Gastrocnemius medialis (tissue), 4 donors: ENCODE measurements at regions of chr21 and their contacts with region 1.

Region 1: GRCh38 chr21:34795175-34795547 is 126.4 kb downstream of the CLIC6 start:
- DNase-seq: peak in 1 of 2 donors; percentile 49
- ATAC-seq: peak; percentile 77 to 80
- H3K4me3 ChIP-seq: peak overlapping the region in 1 of 4 donors; percentile 9
- H3K27ac ChIP-seq: peak overlapping the region; percentile 78 to 88 (median 84)
- H3K4me1 ChIP-seq: peaks cover 31 to 42% of the 10 kb centered on the region in 2 donors
- H3K27me3 ChIP-seq: no peaks in the 10 kb centered on the region
- CTCF ChIP-seq: peak in 4 of 5 experiments; percentile 18 to 30 (median 24)
- POLR2A ChIP-seq: no peak

Region 2: DNA sequence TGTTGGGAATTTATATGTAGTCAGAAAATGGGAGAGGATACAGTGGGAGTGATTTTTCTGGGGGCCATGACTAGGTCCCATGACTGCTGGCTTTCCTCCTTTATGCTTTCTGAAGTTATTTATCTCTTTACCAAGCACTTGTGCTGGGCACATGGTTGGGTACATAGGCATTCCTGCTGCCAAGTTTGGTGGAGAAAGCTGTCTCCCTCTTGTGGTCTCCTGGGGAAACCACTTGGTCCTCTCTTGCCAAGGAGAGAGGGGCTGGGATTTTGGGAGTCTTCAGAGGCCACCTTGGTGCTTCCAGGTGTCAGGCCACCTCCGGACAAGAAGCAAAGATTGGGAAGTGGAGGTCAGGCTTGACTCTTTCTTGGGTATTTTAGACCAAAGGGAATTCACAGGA is 551.6 kb before region 1 on chr21:
- in situ Hi-C with region 1: no loop called
- intact Hi-C with region 1: no loop called
- DNase-seq: no peak
- ATAC-seq: peak in 1 of 2 donors; percentile 51
- H3K4me3 ChIP-seq: no peak overlapping the region
- H3K27ac ChIP-seq: no peak overlapping the region
- H3K4me1 ChIP-seq: no peaks in the 10 kb centered on the region
- H3K27me3 ChIP-seq: no peaks in the 10 kb centered on the region
- CTCF ChIP-seq: peak in 1 of 5 experiments; percentile 16
- POLR2A ChIP-seq: no peak

Region 3: DNA sequence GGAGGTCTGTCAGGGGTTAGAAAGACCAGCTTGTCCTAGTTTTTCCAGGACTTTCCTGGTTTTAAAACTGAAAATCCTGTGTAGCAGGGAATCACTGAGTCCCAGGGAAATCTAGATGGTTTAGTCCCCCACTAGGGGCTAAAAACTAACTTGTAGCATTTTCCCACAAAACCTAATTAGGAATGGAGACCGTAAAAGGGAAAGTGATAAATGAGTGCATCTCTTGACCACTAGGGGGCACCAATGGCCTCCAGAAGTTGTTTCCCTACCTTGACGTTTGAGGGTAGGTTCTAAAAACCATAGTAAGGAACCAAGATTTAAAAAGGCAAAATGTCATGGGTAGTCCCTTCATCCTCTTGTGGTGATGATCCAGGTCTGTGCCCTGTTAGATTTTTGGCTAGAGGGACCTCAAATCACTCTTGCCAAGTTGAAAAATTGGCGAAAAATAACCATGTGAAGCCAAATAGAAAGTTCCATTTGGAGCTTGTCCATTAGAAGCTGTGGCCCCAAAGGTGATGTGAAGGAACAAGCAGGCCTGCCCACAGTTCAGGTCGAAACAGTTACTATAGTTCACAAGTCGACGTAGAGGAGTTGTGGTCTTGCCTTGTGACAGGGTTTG is 101.9 kb before region 1 on chr21:
- in situ Hi-C with region 1: loop called in 1 of 4 experiments (anchors 25 kb)
- intact Hi-C with region 1: loop called (anchors 5 kb)
- DNase-seq: peak in 1 of 2 donors; percentile 38
- ATAC-seq: peak; percentile 29 to 43
- H3K4me3 ChIP-seq: no peak overlapping the region
- H3K27ac ChIP-seq: no peak overlapping the region
- H3K4me1 ChIP-seq: peaks cover 14 to 24% of the 10 kb centered on the region in 2 donors
- H3K27me3 ChIP-seq: no peaks in the 10 kb centered on the region
- CTCF ChIP-seq: peak; percentile 56 to 84 (median 75)
- POLR2A ChIP-seq: no peak

Region 4: DNA sequence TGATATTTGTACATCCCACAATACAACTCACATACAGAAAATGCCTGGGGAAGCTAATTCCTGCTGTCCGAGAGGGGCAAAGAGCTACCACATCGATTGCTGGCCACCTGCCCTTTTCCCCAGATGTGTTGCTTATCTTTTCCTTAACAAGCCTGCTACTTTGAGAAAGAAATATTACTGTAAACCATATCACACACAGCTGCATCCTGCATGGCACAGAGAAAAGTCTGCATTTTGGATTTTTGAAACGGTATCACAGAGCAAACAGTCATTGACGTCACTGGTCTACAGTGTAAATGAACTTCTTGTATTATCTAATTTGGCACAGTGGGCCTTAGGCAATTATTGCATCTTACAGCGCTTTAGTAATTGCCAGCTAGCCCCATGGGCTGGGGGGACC is 38.3 kb after region 1 on chr21:
- in situ Hi-C with region 1: no loop called
- intact Hi-C with region 1: no loop called
- DNase-seq: no peak
- ATAC-seq: no peak
- H3K4me3 ChIP-seq: no peak overlapping the region
- H3K27ac ChIP-seq: no peak overlapping the region
- H3K4me1 ChIP-seq: peaks cover 14 to 31% of the 10 kb centered on the region in 2 donors
- H3K27me3 ChIP-seq: no peaks in the 10 kb centered on the region
- CTCF ChIP-seq: no peak
- POLR2A ChIP-seq: no peak

Region 5: DNA sequence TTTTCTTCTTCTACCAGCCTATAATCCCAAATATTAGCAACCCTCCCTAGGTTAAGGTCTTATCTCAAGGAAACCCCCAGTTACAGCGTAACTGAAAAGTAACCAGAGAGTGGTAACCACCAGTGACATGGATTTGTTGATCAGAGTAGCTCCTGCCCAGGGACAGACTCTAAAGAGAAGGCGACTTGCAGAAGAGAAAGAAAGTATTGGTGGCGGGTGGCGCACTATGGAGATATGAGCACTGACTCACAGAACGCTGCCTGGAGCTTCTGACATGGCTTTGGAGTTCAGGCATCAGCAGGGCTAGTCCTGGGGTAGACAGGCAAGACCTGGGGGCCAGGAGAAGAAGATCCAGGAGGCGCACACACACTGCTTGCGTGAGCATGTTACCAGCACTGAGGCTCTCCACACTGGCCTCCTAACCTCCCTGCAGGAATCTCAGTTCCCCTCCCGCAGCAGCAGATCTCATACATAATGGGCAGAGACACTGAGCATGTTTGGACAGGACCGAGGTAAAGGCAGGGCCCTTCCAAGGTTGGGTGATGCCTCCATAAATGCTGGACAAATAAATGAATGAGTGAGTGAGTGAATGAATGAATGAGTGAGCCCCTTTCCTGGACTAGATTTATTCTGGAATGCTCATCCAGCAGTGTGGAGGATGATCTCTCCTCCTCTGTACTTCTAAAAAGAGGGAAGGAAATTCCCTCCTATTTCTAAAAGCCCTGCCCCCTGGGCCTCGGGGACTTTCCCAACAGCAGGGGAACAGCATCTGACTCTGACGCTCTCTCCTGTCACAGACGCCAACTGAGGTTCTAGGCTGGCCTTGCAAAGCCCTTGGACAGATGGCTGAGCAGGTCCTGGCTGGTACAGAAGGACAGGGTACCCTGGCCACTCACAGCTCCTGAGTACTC is 49.1 kb after region 1 on chr21:
- in situ Hi-C with region 1: no loop called
- intact Hi-C with region 1: loop called (anchors 1 kb)
- DNase-seq: peak; percentile 86 to 93
- ATAC-seq: peak; percentile 65
- H3K4me3 ChIP-seq: peak overlapping the region in 2 of 4 donors; percentile 43 to 49
- H3K27ac ChIP-seq: peak overlapping the region; percentile 85 to 97 (median 92)
- H3K4me1 ChIP-seq: peaks cover 57 to 59% of the 10 kb centered on the region in 2 donors
- H3K27me3 ChIP-seq: no peaks in the 10 kb centered on the region
- CTCF ChIP-seq: no peak
- POLR2A ChIP-seq: peak; percentile 46 to 76

Region 6: GRCh38 chr21:34874684-34875513 is 79.7 kb after region 1 on chr21:
- in situ Hi-C with region 1: loop called (anchors 10 kb)
- intact Hi-C with region 1: no loop called
- DNase-seq: no peak
- ATAC-seq: no peak
- H3K4me3 ChIP-seq: no peak overlapping the region
- H3K27ac ChIP-seq: no peak overlapping the region
- H3K4me1 ChIP-seq: no peaks in the 10 kb centered on the region
- H3K27me3 ChIP-seq: no peaks in the 10 kb centered on the region
- CTCF ChIP-seq: no peak
- POLR2A ChIP-seq: no peak

Region 7: DNA sequence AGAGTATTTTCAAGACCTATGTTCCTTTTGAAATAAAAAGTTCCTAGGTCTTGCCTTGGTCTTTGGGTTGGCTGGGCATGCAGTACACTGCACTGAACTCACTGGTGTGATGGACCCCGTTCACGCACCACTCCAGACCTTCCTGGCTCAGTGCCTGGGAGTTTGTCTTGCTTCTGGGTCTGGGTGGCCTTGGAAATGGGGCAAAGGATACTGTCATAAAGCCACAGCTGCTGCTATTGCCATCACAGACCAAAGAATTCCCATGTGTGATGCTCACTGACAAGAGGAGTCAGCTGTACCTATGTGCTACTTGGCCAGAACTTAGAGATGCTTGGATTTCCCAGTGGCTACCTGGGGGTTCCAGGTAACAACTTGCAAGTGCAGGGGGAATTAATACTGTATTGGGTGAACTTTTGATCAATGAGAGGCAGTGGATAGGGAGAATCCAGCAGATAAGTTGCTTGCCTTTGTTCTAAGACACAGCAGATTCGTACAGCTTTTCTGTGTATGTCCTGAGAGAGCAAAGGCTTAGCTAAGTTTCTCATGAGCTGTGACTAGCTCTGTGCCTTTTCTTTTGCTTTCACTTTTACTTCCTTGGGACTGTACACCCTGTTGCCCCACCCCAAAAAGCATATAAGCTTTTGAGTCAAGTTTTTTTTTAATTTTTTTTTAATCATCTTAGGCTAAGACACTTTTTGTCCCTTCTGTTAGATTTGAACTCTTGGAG is 138.6 kb after region 1 on chr21:
- in situ Hi-C with region 1: no loop called
- intact Hi-C with region 1: no loop called
- DNase-seq: no peak
- ATAC-seq: no peak
- H3K4me3 ChIP-seq: no peak overlapping the region
- H3K27ac ChIP-seq: no peak overlapping the region
- H3K4me1 ChIP-seq: no peaks in the 10 kb centered on the region
- H3K27me3 ChIP-seq: no peaks in the 10 kb centered on the region
- CTCF ChIP-seq: no peak
- POLR2A ChIP-seq: no peak

Region 8: DNA sequence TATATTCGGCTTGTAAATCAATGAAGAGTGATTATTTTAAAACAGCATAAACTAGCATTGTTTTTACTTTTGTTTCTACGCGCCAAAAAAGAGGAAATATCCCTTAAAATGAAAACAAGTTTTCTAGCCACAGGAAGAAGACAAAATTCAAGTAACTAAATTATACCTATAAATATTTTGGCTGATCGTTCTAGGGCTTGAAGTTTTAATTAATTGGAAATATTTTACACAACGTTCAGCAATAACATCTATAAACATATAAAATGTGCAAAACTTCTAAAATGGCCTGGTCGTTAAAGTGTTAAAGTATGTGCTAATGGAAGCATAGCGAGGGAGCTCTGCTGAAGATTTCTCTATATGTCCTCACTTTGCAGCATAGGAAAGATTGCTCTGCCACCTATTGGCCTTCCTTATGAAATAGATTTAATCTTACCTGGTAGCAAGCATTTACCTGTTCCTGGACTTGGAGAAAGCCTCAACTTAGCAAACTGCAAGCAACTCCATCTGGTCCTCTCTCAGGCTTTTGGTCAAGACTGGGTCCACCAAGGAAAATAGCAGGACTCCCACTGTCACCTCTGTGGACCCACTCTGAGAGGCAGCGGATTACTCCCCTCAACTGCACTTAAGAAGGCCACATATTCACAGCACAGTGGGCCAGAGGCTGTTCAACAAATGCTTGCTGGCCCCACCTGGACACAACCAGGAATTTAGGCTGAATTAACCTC is 605.2 kb after region 1 on chr21:
- in situ Hi-C with region 1: no loop called
- intact Hi-C with region 1: loop called (anchors 10 kb)
- DNase-seq: peak in 1 of 2 donors; percentile 8
- ATAC-seq: peak; percentile 93 to 98
- H3K4me3 ChIP-seq: no peak overlapping the region
- H3K27ac ChIP-seq: no peak overlapping the region
- H3K4me1 ChIP-seq: peaks cover 0 to 14% of the 10 kb centered on the region in 2 donors
- H3K27me3 ChIP-seq: no peaks in the 10 kb centered on the region
- CTCF ChIP-seq: peak; percentile 54 to 71 (median 59)
- POLR2A ChIP-seq: no peak